Right ventricle myocardium inferior (tissue), 1 donor: ENCODE measurements at regions of chr2 and their contacts with region 1.

Region 1: DNA sequence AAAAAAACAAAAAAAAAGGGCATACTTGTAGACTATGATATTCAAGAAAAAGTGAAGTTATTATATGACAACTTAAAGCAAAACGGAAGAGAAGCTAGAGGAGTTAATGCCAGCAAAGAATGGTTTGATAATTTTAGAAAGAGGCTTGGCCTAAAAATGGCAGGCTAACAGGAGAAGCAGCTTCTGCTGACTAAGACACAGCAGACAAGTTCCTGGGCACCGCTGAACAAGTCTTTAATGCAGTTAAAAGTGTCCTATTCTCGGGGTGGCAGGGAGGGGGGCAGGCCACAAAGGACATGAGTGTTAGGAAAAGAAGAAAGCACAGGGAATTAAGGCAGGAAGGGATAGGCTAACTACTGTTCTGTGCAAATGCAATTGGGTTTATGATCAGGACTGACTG is 50.3 kb upstream of the GAREM2 start:
- DNase-seq: no peak
- ATAC-seq: peak; percentile 34

Region 2: GRCh38 chr2:25744055-25744454 is 378.6 kb before region 1 on chr2:
- intact Hi-C with region 1: no loop called
- DNase-seq: no peak
- ATAC-seq: peak; percentile 44

Region 3: GRCh38 chr2:26099933-26100332 is 22.7 kb before region 1 on chr2:
- intact Hi-C with region 1: loop called (anchors 2 kb)
- DNase-seq: no peak
- ATAC-seq: peak; percentile 62

Region 4: GRCh38 chr2:26670171-26670570 is 547.5 kb after region 1 on chr2:
- intact Hi-C with region 1: no loop called
- DNase-seq: no peak
- ATAC-seq: no peak